ENCODE measurements at regions of chr6 and their contacts with region 1.

Region 1: DNA sequence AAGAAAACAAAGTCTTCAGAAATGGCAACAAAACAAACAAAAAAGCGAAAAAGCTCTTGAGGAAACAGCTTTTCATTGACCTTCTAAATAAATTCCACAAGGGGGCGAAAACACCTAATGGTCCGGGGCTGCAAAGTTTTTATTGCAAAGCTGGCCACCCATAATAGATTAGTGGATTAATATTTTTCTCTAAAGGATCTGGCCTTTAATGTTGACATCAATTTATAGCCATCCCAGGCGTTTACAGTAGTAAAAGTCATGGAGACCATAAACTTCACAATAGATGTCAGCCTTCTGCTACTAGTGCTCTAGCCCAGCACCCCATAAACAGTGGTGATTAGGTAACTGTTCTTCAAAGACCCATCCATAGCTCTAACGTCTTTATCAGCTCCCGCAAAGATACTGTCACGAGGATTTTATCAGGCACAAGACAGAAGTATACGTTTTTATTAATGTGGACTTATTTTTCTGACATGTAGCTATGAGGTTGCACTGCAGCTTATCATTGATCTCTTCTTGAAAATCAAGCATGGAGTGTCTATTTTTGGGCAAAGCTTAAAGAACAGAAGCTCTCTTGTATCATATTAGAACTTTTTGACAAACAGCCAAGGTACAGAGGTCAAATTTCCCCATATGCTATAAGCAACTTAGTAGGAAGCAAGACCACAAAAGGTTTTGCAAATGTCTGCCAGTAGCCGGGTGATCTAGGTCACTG is 4.7 kb downstream of the CITED2 start:
- DNase-seq: no peak
- H3K4me3 ChIP-seq: no peak overlapping the region
- H3K27ac ChIP-seq: no peak overlapping the region
- H3K27me3 ChIP-seq: no peaks in the 10 kb centered on the region
- CTCF ChIP-seq: peak; percentile 73

Region 2: DNA sequence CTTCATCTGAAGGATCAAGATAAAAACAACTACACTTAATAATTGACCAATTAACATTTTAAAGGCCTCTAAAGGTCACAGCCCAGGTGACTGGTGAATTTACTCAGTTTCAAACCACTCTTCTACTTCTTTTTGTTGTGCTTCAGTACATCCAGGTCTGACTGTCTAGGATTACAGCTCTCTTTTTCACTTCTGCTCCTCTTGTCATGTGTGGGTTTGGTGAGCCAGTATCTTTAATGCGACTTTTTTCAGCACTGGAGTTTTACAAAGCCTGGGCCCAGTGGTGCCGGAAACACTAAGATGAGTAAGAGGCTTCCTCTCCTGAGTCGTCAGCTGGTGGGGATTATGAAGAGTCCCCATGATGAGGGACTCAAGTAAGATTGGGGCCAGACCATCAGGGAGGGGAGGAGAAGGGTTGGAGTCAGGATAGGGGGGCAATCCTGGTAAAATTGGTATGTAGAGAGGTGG is 207.9 kb before region 1 on chr6:
- CTCF ChIA-PET with region 1: no interaction called
- POLR2A ChIA-PET with region 1: no interaction called
- DNase-seq: no peak
- H3K4me3 ChIP-seq: no peak overlapping the region
- H3K27ac ChIP-seq: no peak overlapping the region
- H3K27me3 ChIP-seq: no peaks in the 10 kb centered on the region
- CTCF ChIP-seq: no peak

Region 3: GRCh38 chr6:139349464-139350020 is 20.2 kb before region 1 on chr6:
- CTCF ChIA-PET with region 1: no interaction called
- POLR2A ChIA-PET with region 1: no interaction called
- DNase-seq: no peak
- H3K4me3 ChIP-seq: no peak overlapping the region
- H3K27ac ChIP-seq: no peak overlapping the region
- H3K27me3 ChIP-seq: no peaks in the 10 kb centered on the region
- CTCF ChIP-seq: no peak

Region 4: DNA sequence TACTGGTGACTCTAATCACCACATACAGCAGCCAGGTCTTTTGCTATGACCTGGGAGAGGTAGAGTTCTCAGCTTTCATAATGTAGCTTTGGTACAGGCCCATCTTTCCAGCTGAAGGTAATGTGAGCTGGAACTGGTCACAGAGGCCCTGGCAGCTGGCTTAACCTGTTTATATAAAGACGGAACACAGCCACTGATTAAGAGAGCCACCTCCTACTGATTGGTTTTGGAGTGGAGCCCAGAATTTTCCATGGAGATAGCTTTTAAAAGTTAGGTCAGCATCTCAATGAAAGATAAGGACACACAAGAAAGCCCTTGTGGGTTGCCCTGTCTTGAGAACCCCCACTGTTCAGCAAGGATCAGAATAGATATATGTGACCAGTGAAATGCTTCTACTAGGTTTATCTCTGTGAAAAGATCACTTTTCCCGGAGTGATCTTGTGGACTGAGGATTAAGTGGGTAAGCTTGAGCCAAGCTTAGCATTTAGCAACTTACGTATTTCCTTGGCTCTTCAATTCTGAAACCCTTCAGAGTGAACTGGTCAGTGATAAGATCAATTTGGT is 218.4 kb after region 1 on chr6:
- CTCF ChIA-PET with region 1: interaction called, 4 read pairs
- POLR2A ChIA-PET with region 1: interaction called, 66 read pairs
- DNase-seq: no peak
- H3K4me3 ChIP-seq: no peak overlapping the region
- H3K27ac ChIP-seq: peak overlapping the region; percentile 94
- H3K27me3 ChIP-seq: no peaks in the 10 kb centered on the region
- CTCF ChIP-seq: no peak

Region 5: DNA sequence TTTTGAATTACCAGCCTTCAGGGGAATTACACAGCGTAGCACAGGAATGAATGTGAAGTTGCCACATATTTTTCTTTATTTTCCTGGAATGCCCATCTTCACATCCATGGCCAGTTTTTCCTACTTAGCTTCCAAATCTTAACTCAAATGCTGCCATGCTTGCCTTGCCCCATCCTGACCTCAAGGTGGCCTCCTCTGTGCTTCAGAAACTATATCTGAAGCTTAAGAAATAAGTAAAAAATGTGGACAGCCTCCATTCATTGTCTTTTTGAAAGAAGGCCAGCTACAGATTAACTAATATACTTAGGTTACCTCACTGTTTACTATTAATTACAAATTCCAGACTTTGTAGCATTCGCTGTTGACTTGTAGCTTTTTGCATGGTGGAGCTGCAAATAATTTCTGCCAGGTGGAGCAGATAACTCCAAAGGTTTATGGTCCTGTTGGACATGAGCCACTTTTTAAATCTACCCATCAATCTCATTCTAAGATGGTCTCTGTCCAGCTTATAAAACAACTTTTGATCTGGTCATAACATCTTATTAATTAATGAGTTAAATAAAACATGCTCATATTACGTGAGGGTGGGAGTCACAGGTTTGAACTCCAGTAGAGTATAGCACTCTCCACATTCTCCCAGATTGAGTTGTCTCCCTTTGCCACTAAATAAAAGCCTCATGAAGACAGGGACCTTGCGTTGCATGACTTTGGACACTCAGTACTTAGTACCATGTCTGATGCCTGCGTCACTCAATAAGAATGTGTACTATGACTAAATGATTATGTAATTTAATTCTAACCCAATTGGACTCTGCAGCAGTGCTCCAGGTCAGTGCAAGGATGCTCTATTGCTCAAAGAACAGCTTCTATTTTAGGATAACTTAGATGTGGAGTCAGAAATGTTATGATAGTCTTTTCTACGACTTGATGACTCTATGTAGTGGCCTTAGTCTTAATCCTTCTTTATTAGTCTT is 683.3 kb after region 1 on chr6:
- CTCF ChIA-PET with region 1: interaction called, 10 read pairs
- POLR2A ChIA-PET with region 1: interaction called, 22 read pairs
- DNase-seq: no peak
- H3K4me3 ChIP-seq: no peak overlapping the region
- H3K27ac ChIP-seq: no peak overlapping the region
- H3K27me3 ChIP-seq: no peaks in the 10 kb centered on the region
- CTCF ChIP-seq: peak; percentile 49

Measured in AG04450 (cell line).